ENCODE measurements at regions of chr16 and their contacts with region 1.

Region 1: DNA sequence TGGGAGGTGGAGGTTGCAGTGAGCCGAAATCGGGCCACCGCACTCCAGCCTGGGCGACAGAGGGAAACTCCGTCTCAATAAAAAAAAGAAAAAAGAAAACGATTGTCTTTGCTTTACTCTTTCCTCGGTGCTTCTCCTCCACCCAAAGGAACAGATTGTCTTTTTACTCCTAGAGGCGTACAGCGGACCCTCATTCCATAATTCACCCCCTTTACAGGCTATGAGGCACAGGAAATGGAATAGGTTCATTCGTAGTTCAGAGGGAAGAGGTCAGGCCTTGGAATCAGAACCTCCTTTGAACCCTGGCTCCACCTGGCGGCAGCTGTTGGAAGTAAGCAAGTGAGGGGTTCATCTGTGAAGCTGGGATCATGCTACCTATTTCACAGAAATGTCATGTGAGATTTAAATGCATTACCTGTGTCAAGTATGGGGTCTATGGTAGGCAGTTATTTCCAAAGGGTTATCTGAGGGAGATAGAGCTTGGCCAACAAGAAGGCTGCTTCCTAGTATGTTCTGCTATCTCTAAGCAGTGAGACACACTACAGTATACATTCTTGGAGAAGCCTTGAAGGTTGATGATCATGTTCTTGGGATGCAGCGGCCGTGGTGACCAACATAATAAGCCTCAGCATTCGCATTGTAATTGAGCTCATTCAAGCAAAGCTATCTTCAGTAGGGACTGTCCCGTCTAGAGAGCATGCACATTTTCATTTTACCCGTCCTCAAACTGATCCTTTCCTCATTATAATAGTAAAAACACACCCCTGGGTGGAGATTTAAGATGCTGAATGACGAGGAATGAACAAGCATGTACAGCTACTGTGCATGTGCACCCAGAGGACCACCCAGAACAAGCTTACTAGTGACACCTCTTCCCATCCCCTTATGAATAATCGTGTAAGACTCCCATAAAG is 18.7 kb upstream of the ZNF689 start:
- DNase-seq: peak; percentile 75 to 94
- H3K4me3 ChIP-seq: no peak overlapping the region
- H3K4me1 ChIP-seq: no peaks in the 10 kb centered on the region
- H3K27me3 ChIP-seq: no peaks in the 10 kb centered on the region

Region 2: DNA sequence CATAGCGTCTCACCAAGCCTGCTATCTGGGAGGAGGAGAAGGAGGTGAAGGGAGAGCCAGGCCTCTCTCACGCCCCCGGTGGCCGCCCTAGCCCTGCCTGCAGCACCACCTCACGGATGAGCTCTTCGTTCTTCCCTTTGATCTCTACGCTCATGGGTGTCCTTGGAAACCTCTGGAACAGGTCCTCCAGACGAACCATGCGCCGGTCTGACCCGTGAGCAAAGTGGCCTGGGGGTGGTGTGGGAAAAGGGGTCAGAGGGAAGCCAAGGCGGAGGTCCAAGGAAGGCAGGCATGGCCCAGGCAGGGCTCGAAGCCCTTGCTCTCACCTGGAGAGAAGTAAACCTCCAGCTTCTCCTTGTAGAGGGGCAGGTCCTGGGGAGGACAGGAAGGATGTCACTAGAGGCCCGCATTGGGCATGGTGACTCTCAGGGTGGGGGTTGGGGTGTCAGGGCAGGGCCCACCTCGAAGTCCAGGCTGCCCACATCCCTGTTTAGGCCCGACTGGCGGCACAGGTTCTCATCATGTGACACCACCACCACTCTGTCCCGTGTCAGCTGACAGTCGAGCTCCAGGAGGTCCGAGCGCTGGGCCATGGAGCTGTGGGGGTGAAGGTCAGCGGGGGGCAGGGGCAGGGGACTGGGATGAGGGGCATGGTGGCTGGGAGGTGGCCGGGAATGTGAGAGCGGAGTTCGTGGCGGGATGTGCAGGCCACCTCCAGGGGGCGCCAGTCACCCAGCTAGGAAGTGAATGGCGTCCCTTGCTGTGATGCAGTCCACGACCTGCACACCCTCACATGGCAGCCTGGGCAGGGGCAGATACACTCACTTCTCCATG is 516.5 kb before region 1 on chr16:
- in situ Hi-C with region 1: loop called (anchors 25 kb)
- DNase-seq: peak in 1 of 2 experiments; percentile 82
- H3K4me3 ChIP-seq: no peak overlapping the region
- H3K4me1 ChIP-seq: no peaks in the 10 kb centered on the region
- H3K27me3 ChIP-seq: no peaks in the 10 kb centered on the region

Region 3: GRCh38 chr16:30445408-30446202 is 183.3 kb before region 1 on chr16 and contains the start of gene SEPHS2:
- in situ Hi-C with region 1: loop called (anchors 5 kb)
- DNase-seq: peak; percentile 84 to 97
- H3K4me3 ChIP-seq: peak within 1 kb of the TSS; percentile 56
- H3K4me1 ChIP-seq: peaks cover 8% of the 10 kb centered on the region
- H3K27me3 ChIP-seq: no peaks in the 10 kb centered on the region

Measured in HAP-1 (cell line).